PC-9 (cell line): ENCODE measurements at regions of chr1 and their contacts with region 1.

Region 1: DNA sequence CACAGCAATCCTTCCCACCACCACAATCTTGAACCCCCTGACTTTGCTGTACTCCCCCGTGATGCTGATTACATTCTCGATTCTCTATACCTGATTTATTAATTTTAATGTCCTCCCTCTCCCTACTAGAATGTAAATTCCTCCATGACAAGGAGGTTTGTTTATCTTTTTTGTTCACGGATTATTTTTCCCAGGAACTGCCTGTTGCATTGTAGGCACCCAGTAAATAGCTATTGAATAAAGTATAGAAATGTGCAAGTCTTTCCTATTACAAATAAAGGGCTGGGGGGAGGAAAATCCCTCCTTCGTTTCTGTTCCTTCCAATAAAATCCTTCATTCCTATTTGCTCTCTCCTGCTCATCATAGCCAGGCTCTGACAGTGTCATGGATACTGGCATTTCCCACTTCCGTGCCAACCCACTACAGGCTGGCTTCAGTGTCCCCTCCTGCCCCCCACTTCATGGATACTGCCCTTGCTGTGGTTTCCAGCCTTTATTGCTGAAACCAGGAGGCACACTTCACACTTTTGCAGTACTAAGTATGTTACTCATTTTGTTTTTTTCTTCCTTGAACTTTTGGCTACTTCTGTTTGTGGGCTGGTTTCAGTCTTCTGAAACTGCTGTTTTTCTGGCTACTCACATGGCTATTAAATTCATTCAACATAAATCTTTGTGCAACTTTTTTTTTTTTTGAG is 7.5 kb downstream of the KIF1B start:
- DNase-seq: no peak
- H3K4me3 ChIP-seq: no peak overlapping the region
- H3K27ac ChIP-seq: no peak overlapping the region
- H3K4me1 ChIP-seq: no peaks in the 10 kb centered on the region
- H3K27me3 ChIP-seq: no peaks in the 10 kb centered on the region
- CTCF ChIP-seq: no peak

Region 2: DNA sequence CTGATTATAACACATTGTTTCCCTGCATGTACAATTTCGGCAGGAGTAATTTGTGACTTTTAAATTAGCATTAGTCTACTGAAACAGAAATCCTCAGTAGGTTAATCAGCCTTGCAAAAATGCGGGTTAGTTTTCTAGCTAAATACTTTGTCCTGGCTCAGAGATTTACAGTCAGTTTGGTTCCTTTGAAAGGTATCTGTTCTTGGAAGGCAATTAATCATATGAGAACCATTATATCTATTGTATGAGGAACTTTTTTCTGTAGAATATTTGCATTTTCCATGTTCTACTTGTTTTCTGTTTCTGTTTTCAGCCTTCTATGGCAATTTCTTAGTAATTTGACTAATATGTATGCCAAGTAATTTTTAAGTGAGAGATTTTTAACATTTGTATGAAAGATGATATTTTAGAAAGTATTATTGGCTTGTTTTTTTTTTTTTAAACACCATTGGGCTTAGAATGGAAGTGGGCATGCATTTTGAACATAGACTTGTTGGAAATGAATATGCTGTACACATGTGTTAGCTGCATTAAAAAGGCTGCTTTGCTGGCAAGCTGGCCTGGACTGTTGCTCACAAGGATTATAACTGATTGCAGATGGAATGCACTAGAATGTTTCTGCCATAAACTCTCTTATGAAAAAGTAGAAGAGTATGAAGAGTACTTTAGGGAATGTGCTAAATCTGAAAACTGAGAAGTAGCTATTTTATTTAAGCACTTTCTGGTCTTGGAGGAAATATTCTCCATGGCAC is 18.7 kb after region 1 on chr1:
- CTCF ChIA-PET with region 1: interaction called, 18 read pairs
- POLR2A ChIA-PET with region 1: no interaction called
- intact Hi-C with region 1: no loop called
- DNase-seq: no peak
- H3K4me3 ChIP-seq: no peak overlapping the region
- H3K27ac ChIP-seq: no peak overlapping the region
- H3K4me1 ChIP-seq: no peaks in the 10 kb centered on the region
- H3K27me3 ChIP-seq: no peaks in the 10 kb centered on the region
- CTCF ChIP-seq: no peak